ENCODE measurements at regions of chr9 and their contacts with region 1.

Region 1: GRCh38 chr9:137034863-137035761 is 3.2 kb upstream of the FUT7 start:
- DNase-seq: peak; percentile 91
- ATAC-seq: peak; percentile 82
- H3K4me3 ChIP-seq: no peak overlapping the region
- H3K27ac ChIP-seq: no peak overlapping the region
- H3K4me1 ChIP-seq: peaks cover 20% of the 10 kb centered on the region
- H3K27me3 ChIP-seq: no peaks in the 10 kb centered on the region
- CTCF ChIP-seq: peak; percentile 90

Region 2: DNA sequence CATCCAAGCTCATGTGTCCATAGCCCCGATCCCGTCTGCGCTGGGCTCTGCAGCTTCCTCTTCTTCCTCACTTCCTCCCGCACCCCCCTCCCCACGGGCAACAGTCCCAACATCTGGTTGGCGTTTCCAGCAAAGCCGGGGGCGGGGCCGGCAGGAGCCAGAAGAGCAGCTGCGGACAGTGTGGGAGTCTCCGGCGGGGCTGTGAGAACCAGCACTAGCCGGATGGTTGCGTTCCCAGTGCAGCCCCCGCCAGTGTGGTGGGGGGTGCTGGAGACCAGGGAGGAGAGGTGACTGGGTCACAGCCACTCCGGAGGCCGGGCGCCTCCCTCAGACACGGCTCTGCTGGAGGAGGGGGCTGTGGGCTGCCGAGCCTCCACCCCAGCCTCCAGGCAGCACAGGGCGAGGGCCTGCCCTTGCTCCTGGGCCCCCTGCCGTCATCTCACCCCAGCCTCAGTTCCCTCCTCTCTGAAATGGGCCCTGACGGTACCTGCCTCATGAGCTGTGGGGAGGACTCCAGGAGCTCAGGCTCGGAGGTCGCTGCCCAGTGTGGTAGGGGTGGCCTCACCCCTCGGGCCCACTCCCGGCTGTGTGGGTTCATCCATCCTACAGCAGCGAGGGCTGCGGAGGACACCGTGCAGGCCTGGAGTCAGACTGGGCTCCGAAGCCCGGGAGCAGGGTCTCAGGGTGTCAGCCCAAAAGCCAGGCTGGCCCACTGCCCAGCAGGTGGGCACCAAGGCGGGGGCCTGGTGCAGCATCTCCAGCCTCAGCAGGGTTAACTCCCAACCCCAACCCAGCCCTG is 447.8 kb before region 1 on chr9:
- intact Hi-C with region 1: no loop called
- DNase-seq: peak; percentile 86
- ATAC-seq: peak; percentile 61
- H3K4me3 ChIP-seq: no peak overlapping the region
- H3K27ac ChIP-seq: peak overlapping the region; percentile 17
- H3K4me1 ChIP-seq: peaks cover 41% of the 10 kb centered on the region
- H3K27me3 ChIP-seq: no peaks in the 10 kb centered on the region
- CTCF ChIP-seq: no peak

Region 3: DNA sequence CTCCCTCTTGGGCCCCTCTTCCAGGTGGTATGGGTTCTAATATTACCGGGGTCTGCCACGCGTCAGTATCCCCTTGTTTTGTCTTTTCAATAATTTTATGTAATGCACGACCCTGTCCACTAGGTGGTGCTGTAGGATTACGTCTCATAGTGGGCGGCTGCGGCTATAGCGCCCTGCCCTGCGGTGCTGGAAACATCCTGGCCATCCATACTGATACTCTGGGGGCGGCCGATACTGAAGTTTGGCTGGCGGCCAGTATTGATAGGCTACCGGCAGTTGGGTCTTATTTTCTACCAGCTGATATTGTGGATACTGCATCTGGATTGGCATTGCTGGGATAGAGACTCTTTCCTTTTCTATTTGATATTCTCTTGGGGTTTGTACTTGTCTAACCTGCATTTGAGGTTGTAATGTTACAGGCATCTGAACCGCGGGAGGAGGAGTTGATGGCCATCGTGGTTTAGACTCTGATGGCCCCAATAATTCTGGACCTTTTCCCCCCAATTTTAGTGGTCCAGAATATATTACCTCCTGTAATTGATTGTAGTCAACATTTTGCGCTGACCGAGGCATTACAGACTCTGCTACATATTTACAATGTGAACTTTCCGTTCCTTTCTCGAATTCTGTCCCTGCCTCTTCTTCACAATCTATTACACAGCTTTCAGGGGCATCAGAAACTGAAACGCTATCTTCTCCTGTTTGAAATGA is 247.3 kb before region 1 on chr9:
- intact Hi-C with region 1: loop called (anchors 5 kb)
- DNase-seq: no peak
- ATAC-seq: no peak
- H3K4me3 ChIP-seq: no peak overlapping the region
- H3K27ac ChIP-seq: no peak overlapping the region
- H3K4me1 ChIP-seq: peaks cover 22% of the 10 kb centered on the region
- H3K27me3 ChIP-seq: no peaks in the 10 kb centered on the region
- CTCF ChIP-seq: peak; percentile 87

Region 4: GRCh38 chr9:136944519-136945279 is 90.4 kb before region 1 on chr9 and contains the starts of genes C8G and FBXW5:
- intact Hi-C with region 1: loop called (anchors 10 kb)
- DNase-seq: peak; percentile 98
- ATAC-seq: peak; percentile 91
- H3K4me3 ChIP-seq: peak within 1 kb of the TSS; percentile 95
- H3K27ac ChIP-seq: peak within 1 kb of the TSS; percentile 83
- H3K4me1 ChIP-seq: peaks cover 22% of the 10 kb centered on the region
- H3K27me3 ChIP-seq: no peaks in the 10 kb centered on the region
- CTCF ChIP-seq: peak; percentile 99
- total RNA-seq, gene C8G: 1.1 TPM
- total RNA-seq, gene FBXW5: 91.2 TPM